Pancreas (tissue), 10 donors: ENCODE measurements at regions of chr1 and their contacts with region 1.

Region 1: GRCh38 chr1:25895365-25895993 is 10.7 kb downstream of the STMN1 start:
- DNase-seq: peak; percentile 77 to 93 (median 86)
- ATAC-seq: peak; percentile 86 to 96 (median 95)
- H3K4me3 ChIP-seq: no peak overlapping the region
- H3K27ac ChIP-seq: no peak overlapping the region
- H3K4me1 ChIP-seq: peaks cover 5 to 21% (median 9%) of the 10 kb centered on the region in 3 donors
- H3K27me3 ChIP-seq: no peaks in the 10 kb centered on the region
- CTCF ChIP-seq: peak; percentile 97 to 99 (median 98)

Region 2: GRCh38 chr1:25819576-25820246 is 75.8 kb before region 1 on chr1 and contains the start of gene MTFR1L:
- intact Hi-C with region 1: no loop called
- DNase-seq: peak; percentile 91 to 95 (median 92)
- ATAC-seq: peak; percentile 86 to 94 (median 92)
- H3K4me3 ChIP-seq: peak within 1 kb of the TSS; percentile 74 to 97 (median 86)
- H3K27ac ChIP-seq: peak within 1 kb of the TSS; percentile 91 to 95 (median 92)
- H3K4me1 ChIP-seq: peaks cover 16 to 19% (median 18%) of the 10 kb centered on the region in 3 donors
- H3K27me3 ChIP-seq: no peaks in the 10 kb centered on the region
- CTCF ChIP-seq: no peak
- total RNA-seq, gene MTFR1L: 24.0 to 36.0 (median 26.3) TPM

Region 3: DNA sequence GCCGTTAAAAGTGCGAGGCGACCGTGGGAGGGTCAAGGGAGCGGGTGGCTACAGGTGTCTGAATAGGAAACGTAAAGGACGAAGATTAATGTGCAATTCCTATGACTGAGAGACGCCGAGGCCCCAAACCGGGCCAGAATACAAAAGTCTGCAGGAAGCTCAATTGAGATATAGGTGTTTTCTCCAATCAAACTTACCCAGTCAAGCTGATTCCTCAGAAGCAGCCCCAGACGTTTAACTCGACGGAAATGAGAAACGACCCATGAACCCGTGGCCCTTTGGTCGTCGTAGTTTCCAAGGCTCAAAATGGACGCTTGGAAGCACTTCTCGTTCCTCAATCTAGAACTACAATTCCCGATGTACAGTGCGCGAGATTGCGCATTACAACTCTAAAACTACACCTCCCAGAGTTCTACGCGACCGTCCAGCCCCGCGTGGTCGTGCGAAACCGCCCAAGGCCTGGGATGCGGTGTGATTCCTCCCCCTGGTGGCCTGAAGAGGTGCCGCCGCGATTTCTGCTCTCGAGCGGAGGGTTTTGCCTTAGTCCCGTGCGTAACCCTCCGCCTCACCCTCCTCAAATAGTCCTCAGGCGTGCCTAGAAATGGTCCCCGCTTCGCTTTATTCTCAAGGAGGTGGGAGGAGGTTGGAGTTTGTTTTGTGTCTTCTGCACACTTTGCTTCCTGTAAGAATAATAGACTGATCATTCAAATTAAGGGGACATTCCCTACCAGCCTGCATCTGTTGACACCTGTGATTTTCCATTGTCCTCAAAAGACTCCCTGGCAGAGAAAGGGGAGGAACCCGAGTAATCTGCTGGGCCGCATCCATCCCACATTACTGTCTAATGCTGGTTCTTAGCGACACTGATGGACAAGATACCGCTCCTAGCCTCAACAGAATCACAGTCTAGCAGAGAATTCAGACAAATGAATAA is 102.6 kb after region 1 on chr1 and contains the start of gene PAFAH2:
- intact Hi-C with region 1: loop called in 2 of 3 experiments (anchors 5 to 10 kb)
- DNase-seq: peak; percentile 96 to 98 (median 97)
- ATAC-seq: peak; percentile 97 to 99 (median 98)
- H3K4me3 ChIP-seq: peak within 1 kb of the TSS; percentile 38 to 71 (median 58)
- H3K27ac ChIP-seq: peak within 1 kb of the TSS in 3 of 4 donors; percentile 57 to 86 (median 85)
- H3K4me1 ChIP-seq: peaks cover 0 to 14% (median 0%) of the 10 kb centered on the region in 3 donors
- H3K27me3 ChIP-seq: no peaks in the 10 kb centered on the region
- CTCF ChIP-seq: peak; percentile 91 to 95 (median 94)
- total RNA-seq, gene PAFAH2: 11.0 to 19.0 (median 13.7) TPM

Region 4: DNA sequence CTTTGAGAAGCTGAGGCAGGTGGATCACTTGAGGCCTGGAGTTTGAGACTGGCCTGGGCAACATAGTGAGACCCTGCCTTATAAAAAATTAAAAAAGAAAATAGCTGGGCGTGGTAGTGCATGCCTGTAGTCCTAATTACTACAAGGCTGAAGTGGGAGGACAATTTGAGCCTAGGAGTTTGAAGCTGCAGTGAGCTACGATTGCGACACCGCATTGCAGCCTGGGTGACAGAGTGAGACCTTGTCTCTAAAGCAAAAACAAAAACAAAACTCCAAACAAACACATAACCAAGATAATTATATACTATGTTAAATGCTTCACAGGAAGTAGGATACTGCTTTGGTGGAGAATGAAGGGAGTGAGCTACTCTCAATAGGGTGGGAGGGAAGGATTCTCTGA is 107.8 kb after region 1 on chr1:
- intact Hi-C with region 1: loop called in 2 of 3 experiments (anchors 5 to 10 kb)
- DNase-seq: no peak
- ATAC-seq: no peak
- H3K4me3 ChIP-seq: no peak overlapping the region
- H3K27ac ChIP-seq: no peak overlapping the region
- H3K4me1 ChIP-seq: peaks cover 0 to 4% (median 0%) of the 10 kb centered on the region in 3 donors
- H3K27me3 ChIP-seq: no peaks in the 10 kb centered on the region
- CTCF ChIP-seq: no peak